Adrenal gland (tissue), 19 donors: ENCODE measurements at regions of chr9 and their contacts with region 1.

Region 1: GRCh38 chr9:129473523-129474229 is 147.2 kb downstream of the C9orf50 start:
- DNase-seq: peak; percentile 68 to 93 (median 83)
- H3K4me3 ChIP-seq: no peak overlapping the region
- H3K27ac ChIP-seq: peak overlapping the region; percentile 25 to 100 (median 82)
- H3K4me1 ChIP-seq: peaks cover 28 to 46% of the 10 kb centered on the region in 2 donors
- H3K27me3 ChIP-seq: no peaks in the 10 kb centered on the region
- CTCF ChIP-seq: no peak
- POLR2A ChIP-seq: peak in 1 of 2 donors; percentile 61

Region 2: DNA sequence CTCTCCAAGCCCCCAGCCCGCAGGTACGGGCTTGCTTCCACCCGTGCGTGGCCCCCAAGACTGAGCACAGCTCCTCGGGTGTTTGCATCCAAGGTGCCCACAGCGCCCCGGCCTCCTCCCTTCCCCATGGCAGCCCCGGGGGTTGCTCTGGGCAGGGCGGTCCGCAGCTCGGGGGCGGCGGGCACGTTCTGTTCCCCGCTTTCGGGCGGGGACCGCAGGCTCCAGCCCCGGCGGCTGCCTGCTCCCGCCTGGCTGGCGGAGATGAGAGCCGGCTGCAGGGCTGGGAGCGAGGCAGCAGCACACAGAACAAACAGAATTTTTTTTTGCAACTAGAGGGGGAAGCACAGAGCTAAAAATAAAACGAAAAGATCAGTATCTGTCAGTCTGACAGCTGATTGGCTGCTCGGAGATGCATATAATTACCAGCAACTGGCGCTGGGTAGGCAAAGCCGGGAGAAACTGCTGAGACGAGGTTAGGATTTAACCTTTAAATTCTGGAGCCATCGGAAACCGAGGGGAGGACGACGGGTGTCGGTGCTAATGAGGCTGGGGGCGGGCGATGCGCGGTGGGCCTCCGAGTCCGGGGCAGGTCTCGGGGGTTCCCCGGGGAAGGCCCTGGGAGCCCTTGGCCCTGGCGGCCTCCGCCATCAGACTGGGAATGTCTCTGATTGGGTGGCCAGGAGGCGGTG is 153.0 kb before region 1 on chr9:
- intact Hi-C with region 1: loop called in 1 of 2 experiments (anchors 10 kb)
- DNase-seq: peak; percentile 58 to 90 (median 80)
- H3K4me3 ChIP-seq: peak overlapping the region in 2 of 4 donors; percentile 15 to 46
- H3K27ac ChIP-seq: peak overlapping the region in 4 of 5 donors; percentile 72 to 92 (median 82)
- H3K4me1 ChIP-seq: peaks cover 24 to 82% of the 10 kb centered on the region in 2 donors
- H3K27me3 ChIP-seq: no peaks in the 10 kb centered on the region
- CTCF ChIP-seq: peak in 5 of 6 experiments; percentile 26 to 36 (median 34)
- POLR2A ChIP-seq: peak; percentile 49 to 85